SK-N-SH (cell line): ENCODE measurements at regions of chr17 and their contacts with region 1.

Region 1: GRCh38 chr17:63478791-63479494 is 2.1 kb downstream of the ACE start:
- DNase-seq: peak; percentile 94
- H3K4me3 ChIP-seq: no peak overlapping the region
- H3K27ac ChIP-seq: peak overlapping the region in 1 of 2 experiments; percentile 84; a peak in 2 of 4 replicates
- H3K4me1 ChIP-seq: peaks cover 9 to 67% of the 10 kb centered on the region in 2 experiments
- H3K27me3 ChIP-seq: no peaks in the 10 kb centered on the region
- CTCF ChIP-seq: peak; percentile 98
- EP300 ChIP-seq: no peak
- RAD21 ChIP-seq: peak; percentile 88

Region 2: GRCh38 chr17:63455417-63455816 is 23.5 kb before region 1 on chr17:
- CTCF ChIA-PET with region 1: interaction called, 71 read pairs
- POLR2A ChIA-PET with region 1: interaction called, 20 read pairs
- DNase-seq: peak; percentile 86
- H3K4me3 ChIP-seq: no peak overlapping the region
- H3K27ac ChIP-seq: peak overlapping the region; percentile 14 to 97; a peak in 3 of 4 replicates
- H3K4me1 ChIP-seq: peaks cover 3 to 41% of the 10 kb centered on the region in 2 experiments
- H3K27me3 ChIP-seq: no peaks in the 10 kb centered on the region
- CTCF ChIP-seq: no peak
- EP300 ChIP-seq: peak in 1 of 2 experiments; percentile 86; a peak in 2 of 4 replicates
- RAD21 ChIP-seq: peak; percentile 47

Region 3: GRCh38 chr17:63490321-63490720 is 11.4 kb after region 1 on chr17:
- CTCF ChIA-PET with region 1: interaction called, 65 read pairs
- POLR2A ChIA-PET with region 1: interaction called, 4 read pairs
- DNase-seq: no peak
- H3K4me3 ChIP-seq: no peak overlapping the region
- H3K27ac ChIP-seq: no peak overlapping the region
- H3K4me1 ChIP-seq: peaks cover 0 to 1% of the 10 kb centered on the region in 2 experiments; a peak in 1 of 4 replicates
- H3K27me3 ChIP-seq: no peaks in the 10 kb centered on the region
- CTCF ChIP-seq: no peak
- EP300 ChIP-seq: no peak
- RAD21 ChIP-seq: no peak

Region 4: GRCh38 chr17:63529711-63530556 is 51.0 kb after region 1 on chr17:
- CTCF ChIA-PET with region 1: interaction called, 10 read pairs
- POLR2A ChIA-PET with region 1: no interaction called
- DNase-seq: peak; percentile 74
- H3K4me3 ChIP-seq: no peak overlapping the region
- H3K27ac ChIP-seq: peak overlapping the region in 1 of 2 experiments; percentile 32; a peak in 1 of 4 replicates
- H3K4me1 ChIP-seq: peaks cover 0 to 29% of the 10 kb centered on the region in 2 experiments; a peak in 1 of 4 replicates
- H3K27me3 ChIP-seq: 0 out of 2 replicates have a peak, but pooled peaks cover 17% of the 10 kb centered on the region
- CTCF ChIP-seq: no peak
- EP300 ChIP-seq: no peak
- RAD21 ChIP-seq: 0 out of 2 replicates have a peak, but pooled peaks have one; percentile 9

Region 5: DNA sequence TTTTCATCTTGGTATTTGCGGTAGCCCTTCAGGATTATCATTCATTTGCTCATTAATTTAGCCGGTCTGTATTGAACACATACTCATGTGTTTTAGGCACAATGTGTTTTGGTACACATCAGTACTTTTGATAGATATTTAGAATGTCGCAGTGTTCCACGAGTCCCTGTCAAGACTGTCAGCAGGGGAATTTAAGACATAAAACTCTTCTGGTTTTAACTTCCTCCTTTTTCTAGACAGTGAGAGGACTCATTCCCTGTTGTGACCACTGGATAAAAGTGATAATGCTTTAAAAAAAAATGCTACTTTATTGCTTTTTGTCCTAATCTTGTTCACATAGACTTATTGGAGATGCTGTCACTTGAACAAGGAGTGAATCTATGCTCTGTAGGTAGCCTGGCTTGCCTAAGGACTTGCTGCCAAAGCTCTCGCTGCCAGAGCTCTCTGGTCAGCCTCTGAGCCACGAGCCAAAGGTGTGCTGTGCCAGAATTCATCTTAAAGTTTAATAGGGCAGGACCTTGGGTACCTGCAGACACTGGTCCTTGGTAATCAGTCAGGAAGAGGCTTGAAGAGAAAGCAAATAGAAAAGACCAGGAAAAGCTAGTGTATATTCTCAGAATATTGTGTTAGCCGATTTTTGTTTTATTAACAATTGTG is 76.7 kb after region 1 on chr17:
- CTCF ChIA-PET with region 1: interaction called, 27 read pairs
- POLR2A ChIA-PET with region 1: interaction called, 8 read pairs
- DNase-seq: no peak
- H3K4me3 ChIP-seq: no peak overlapping the region
- H3K27ac ChIP-seq: no peak overlapping the region
- H3K4me1 ChIP-seq: peaks cover 9 to 22% of the 10 kb centered on the region in 2 experiments; a peak in 2 of 4 replicates
- H3K27me3 ChIP-seq: no peaks in the 10 kb centered on the region
- CTCF ChIP-seq: no peak
- EP300 ChIP-seq: no peak
- RAD21 ChIP-seq: no peak